Activated CD4-positive, alpha-beta T cell treated with anti-CD3 and anti-CD28 coated beads for 36 hours (primary cell): ENCODE measurements at regions of chr14 and their contacts with region 1.

Region 1: GRCh38 chr14:69460093-69460701 is 24.3 kb upstream of the PLEKHD1 start:
- DNase-seq: peak; percentile 79
- ATAC-seq: peak; percentile 93
- H3K4me3 Mint-ChIP-seq: no peak overlapping the region
- H3K27ac Mint-ChIP-seq: no peak overlapping the region
- H3K4me1 Mint-ChIP-seq: no peaks in the 10 kb centered on the region
- H3K27me3 Mint-ChIP-seq: no peaks in the 10 kb centered on the region

Region 2: GRCh38 chr14:69260861-69261564 is 199.2 kb before region 1 on chr14:
- CTCF ChIA-PET with region 1: interaction called, 9 read pairs
- POLR2A ChIA-PET with region 1: no interaction called
- intact Hi-C with region 1: loop called (anchors 1 to 5 kb)
- DNase-seq: peak; percentile 74
- ATAC-seq: peak; percentile 88
- H3K4me3 Mint-ChIP-seq: peak overlapping the region; percentile 27
- H3K27ac Mint-ChIP-seq: no peak overlapping the region
- H3K4me1 Mint-ChIP-seq: peaks cover 7% of the 10 kb centered on the region
- H3K27me3 Mint-ChIP-seq: peaks cover 45% of the 10 kb centered on the region

Region 3: GRCh38 chr14:69475194-69475818 is 15.1 kb after region 1 on chr14:
- CTCF ChIA-PET with region 1: interaction called, 10 read pairs
- POLR2A ChIA-PET with region 1: no interaction called
- intact Hi-C with region 1: no loop called
- DNase-seq: peak; percentile 29
- ATAC-seq: peak; percentile 53
- H3K4me3 Mint-ChIP-seq: no peak overlapping the region
- H3K27ac Mint-ChIP-seq: no peak overlapping the region
- H3K4me1 Mint-ChIP-seq: no peaks in the 10 kb centered on the region
- H3K27me3 Mint-ChIP-seq: peaks cover 2% of the 10 kb centered on the region